ENCODE measurements at regions of chr19 and their contacts with region 1.

Region 1: DNA sequence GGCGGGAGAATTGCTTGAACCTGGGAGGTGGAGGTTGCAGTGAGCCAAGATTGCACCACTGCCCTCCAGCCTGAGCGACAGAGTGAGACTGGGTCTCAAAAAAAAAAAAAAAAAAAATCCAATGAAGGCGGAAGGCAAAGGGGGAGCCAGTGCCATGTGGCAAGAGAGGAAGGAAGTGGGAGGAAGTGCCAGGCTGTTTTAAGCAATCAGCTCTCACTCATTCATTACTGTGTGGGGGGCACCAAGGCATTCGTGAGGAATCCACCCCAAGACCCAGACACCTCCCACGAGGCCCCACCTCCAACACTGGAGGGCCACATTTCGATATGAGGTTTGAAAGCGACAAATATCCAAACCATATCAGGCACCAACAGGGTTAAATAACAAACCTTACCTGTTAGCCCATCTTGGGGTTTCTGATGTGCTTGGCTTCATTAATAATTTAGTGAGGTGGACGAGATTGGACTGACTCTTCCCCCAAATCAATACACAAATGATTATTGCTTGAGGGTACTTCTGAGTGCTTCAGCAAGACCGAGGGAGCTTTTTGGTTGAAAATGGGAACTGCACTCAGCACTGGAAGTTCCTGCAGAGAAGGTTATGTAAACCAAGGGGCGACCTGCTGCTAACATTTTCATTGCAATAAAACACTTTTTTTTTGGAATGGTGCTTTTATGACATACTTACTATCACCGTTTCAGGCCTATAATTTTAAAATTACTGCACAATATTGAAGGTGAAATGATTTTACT is 7.5 kb upstream of the LRP3 start:
- DNase-seq: no peak
- H3K4me3 Mint-ChIP-seq: no peak overlapping the region
- H3K27ac Mint-ChIP-seq: no peak overlapping the region
- H3K4me1 Mint-ChIP-seq: peaks cover 9% of the 10 kb centered on the region
- H3K27me3 Mint-ChIP-seq: peaks cover 41% of the 10 kb centered on the region

Region 2: DNA sequence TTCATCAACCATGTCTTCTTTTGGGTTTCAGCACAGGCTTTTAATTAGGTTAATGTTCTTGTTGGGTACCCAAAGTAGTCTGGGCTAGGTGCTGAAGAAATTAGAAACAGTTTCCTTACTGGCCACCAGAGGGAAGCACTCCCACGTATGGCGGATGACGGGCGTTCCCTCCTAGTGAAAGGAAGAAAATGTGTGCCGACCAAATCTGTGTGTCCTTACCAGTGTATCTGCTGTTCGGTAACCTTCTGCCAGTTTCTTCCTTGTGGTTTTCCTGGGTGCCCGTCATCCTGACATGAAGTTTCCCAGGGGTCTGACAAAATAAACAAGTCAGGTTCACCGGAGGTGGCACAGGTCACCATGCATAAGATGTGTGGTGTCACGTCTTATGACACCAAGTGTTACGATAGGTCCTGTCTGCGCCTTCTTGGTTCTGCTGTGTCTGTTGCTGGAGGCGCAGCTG is 60.6 kb before region 1 on chr19:
- CTCF ChIA-PET with region 1: interaction called, 30 read pairs
- DNase-seq: peak; percentile 69
- H3K4me3 Mint-ChIP-seq: no peak overlapping the region
- H3K27ac Mint-ChIP-seq: no peak overlapping the region
- H3K4me1 Mint-ChIP-seq: peaks cover 5% of the 10 kb centered on the region
- H3K27me3 Mint-ChIP-seq: no peaks in the 10 kb centered on the region

Region 3: GRCh38 chr19:33143897-33144405 is 42.7 kb before region 1 on chr19:
- CTCF ChIA-PET with region 1: interaction called, 31 read pairs
- DNase-seq: peak; percentile 69
- H3K4me3 Mint-ChIP-seq: no peak overlapping the region
- H3K27ac Mint-ChIP-seq: no peak overlapping the region
- H3K4me1 Mint-ChIP-seq: peaks cover 4% of the 10 kb centered on the region
- H3K27me3 Mint-ChIP-seq: peaks cover 21% of the 10 kb centered on the region

Region 4: GRCh38 chr19:33157906-33158305 is 28.7 kb before region 1 on chr19:
- CTCF ChIA-PET with region 1: interaction called, 10 read pairs
- DNase-seq: no peak
- H3K4me3 Mint-ChIP-seq: no peak overlapping the region
- H3K27ac Mint-ChIP-seq: peak overlapping the region; percentile 72
- H3K4me1 Mint-ChIP-seq: peaks cover 43% of the 10 kb centered on the region
- H3K27me3 Mint-ChIP-seq: no peaks in the 10 kb centered on the region